Psoas muscle (tissue), 8 donors: ENCODE measurements at regions of chr7 and their contacts with region 1.

Region 1: GRCh38 chr7:142853739-142854371 is 1.0 kb upstream of the EPHB6 start:
- DNase-seq: peak; percentile 47 to 73
- ATAC-seq: peak; percentile 72 to 83 (median 76)
- H3K4me3 ChIP-seq: peak overlapping the region; percentile 79
- H3K27ac ChIP-seq: no peak overlapping the region
- H3K4me1 ChIP-seq: no peaks in the 10 kb centered on the region
- H3K27me3 ChIP-seq: peaks cover 0 to 3% (median 0%) of the 10 kb centered on the region in 3 donors
- CTCF ChIP-seq: peak; percentile 75

Region 2: DNA sequence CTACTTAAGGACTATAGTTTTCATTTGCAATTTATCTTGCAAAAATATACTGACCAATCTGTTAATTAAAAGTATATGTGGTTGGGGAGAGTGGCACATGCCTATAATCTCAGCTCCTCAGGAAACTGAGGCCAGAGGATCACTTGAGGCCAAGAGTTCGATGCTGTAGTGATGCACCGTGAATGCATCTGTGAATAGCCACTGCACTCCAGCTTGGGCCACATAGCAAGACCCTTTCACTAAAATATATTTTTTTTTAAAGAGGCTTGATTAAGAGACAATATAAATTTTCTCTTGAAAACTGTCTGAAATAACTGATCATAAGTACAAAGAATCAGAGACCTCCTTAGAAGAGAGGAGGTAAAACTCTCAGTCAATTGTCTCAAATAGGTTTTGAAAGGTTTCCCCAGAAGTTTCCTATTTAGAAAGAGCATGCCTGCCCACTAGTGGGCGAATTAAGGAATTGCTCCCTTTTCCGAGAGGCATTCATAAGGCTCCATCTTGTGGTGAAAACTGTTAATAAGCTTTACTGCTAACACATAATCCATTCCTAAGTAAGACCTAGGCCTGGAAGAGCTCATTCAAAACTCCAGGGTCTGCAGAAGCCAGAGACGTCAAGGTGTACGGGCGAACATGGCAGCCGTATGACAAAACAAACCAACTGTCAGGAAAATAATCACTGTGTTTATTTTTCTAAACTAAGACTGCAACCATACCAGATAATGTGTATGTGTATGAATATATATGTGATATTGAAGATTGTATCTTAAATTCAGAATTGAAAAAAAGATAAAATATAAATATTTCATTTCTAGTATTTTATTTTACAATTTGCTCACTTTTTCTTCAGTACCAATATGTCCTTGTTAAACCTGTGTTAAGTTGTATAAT is 361.2 kb after region 1 on chr7:
- intact Hi-C with region 1: loop called (anchors 2 to 10 kb)
- DNase-seq: peak in 1 of 2 donors; percentile 31
- ATAC-seq: peak; percentile 81 to 93 (median 84)
- H3K4me3 ChIP-seq: no peak overlapping the region
- H3K27ac ChIP-seq: no peak overlapping the region
- H3K4me1 ChIP-seq: no peaks in the 10 kb centered on the region
- H3K27me3 ChIP-seq: no peaks in the 10 kb centered on the region
- CTCF ChIP-seq: peak; percentile 100